ENCODE measurements at regions of chr3 and their contacts with region 1.

Region 1: DNA sequence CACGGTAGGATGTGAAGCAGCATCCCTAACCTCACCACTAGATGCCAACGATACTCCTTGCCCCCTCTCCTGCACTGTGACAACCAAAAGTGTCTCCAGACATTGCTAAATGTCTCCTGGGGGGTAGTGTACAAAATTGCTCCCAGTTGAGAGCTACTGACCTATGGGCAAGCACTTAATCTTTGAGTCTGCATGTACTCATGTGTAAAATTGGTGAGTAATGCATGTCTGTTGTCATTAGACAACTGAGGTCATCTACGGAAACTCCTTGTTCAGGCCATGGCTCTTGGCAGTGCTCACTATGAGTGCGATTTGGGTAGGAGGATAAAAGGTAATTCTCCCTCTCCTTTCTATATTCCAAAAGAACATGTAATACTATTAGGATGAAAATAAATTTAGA is 29.2 kb downstream of the PDHB start:
- DNase-seq: no peak
- H3K4me3 ChIP-seq: no peak overlapping the region
- H3K27ac ChIP-seq: peak overlapping the region; percentile 6
- H3K4me1 ChIP-seq: peaks cover 45% of the 10 kb centered on the region
- CTCF ChIP-seq: no peak

Region 2: GRCh38 chr3:58349792-58350626 is 54.4 kb before region 1 on chr3:
- CTCF ChIA-PET with region 1: no interaction called
- POLR2A ChIA-PET with region 1: interaction called, 13 read pairs
- intact Hi-C with region 1: no loop called
- DNase-seq: peak; percentile 98
- H3K4me3 ChIP-seq: peak overlapping the region; percentile 62
- H3K27ac ChIP-seq: peak overlapping the region; percentile 99
- H3K4me1 ChIP-seq: peaks cover 98% of the 10 kb centered on the region
- CTCF ChIP-seq: no peak

Region 3: GRCh38 chr3:58388550-58389091 is 15.8 kb before region 1 on chr3:
- CTCF ChIA-PET with region 1: interaction called, 3 read pairs
- POLR2A ChIA-PET with region 1: interaction called, 10 read pairs
- intact Hi-C with region 1: no loop called
- DNase-seq: no peak
- H3K4me3 ChIP-seq: peak overlapping the region; percentile 24
- H3K27ac ChIP-seq: peak overlapping the region; percentile 35
- H3K4me1 ChIP-seq: peaks cover 43% of the 10 kb centered on the region
- CTCF ChIP-seq: no peak

Region 4: GRCh38 chr3:58585005-58585786 is 180.8 kb after region 1 on chr3:
- CTCF ChIA-PET with region 1: no interaction called
- POLR2A ChIA-PET with region 1: no interaction called
- intact Hi-C with region 1: no loop called
- DNase-seq: peak; percentile 20
- H3K4me3 ChIP-seq: peak overlapping the region; percentile 26
- H3K27ac ChIP-seq: no peak overlapping the region
- H3K4me1 ChIP-seq: peaks cover 3% of the 10 kb centered on the region
- CTCF ChIP-seq: 0 out of 2 replicates have a peak, but pooled peaks have one; percentile 26

Region 5: DNA sequence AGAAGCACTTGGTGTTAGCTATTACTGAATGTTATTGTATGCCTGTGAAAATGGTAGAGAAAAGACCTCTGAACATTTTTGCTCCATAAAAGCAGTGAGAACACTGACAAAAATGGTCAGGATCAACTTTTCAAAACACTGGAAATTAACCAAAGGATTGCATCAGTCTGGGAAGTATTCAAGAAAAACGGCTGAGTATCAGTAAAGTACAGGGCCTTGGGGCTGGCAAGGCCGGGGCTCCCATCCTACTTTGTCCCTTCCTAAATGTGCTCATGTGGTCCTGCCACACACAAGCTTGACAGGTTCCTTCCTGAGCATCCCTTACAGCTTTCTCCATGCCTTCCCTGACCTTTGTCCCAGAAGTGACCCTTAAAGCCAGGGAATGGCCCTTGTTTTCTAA is 561.5 kb after region 1 on chr3:
- CTCF ChIA-PET with region 1: no interaction called
- POLR2A ChIA-PET with region 1: no interaction called
- intact Hi-C with region 1: no loop called
- DNase-seq: no peak
- H3K4me3 ChIP-seq: no peak overlapping the region
- H3K27ac ChIP-seq: no peak overlapping the region
- H3K4me1 ChIP-seq: no peaks in the 10 kb centered on the region
- CTCF ChIP-seq: no peak